Sigmoid colon (tissue), 7 donors: ENCODE measurements at regions of chr7 and their contacts with region 1.

Region 1: DNA sequence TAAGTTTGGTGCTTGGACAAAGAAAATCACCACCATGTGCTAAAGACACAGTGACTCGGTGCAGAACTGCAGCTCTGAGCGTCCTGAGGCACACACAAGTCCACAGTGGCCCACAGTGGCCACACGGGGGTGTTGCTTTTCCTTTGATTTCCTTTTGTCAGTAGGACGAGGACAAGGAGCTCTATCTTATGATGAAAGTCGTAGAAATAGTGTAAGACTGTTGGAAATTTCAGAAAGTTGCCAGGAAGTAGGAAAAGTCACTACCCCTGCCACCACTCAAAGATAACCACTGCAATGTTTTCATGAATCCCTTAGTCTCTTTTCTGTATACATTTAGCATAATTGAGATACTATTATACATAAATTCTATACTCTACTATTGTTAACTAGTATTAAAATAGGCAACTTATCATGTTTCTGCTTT is 146.0 kb downstream of the TNS3 start:
- DNase-seq: peak; percentile 87
- H3K4me3 ChIP-seq: no peak overlapping the region
- H3K27ac ChIP-seq: no peak overlapping the region
- H3K4me1 ChIP-seq: peaks cover 0 to 8% (median 5%) of the 10 kb centered on the region in 4 donors
- H3K27me3 ChIP-seq: no peaks in the 10 kb centered on the region
- CTCF ChIP-seq: peak; percentile 57 to 85 (median 80)
- EP300 ChIP-seq: no peak
- POLR2A ChIP-seq: no peak

Region 2: DNA sequence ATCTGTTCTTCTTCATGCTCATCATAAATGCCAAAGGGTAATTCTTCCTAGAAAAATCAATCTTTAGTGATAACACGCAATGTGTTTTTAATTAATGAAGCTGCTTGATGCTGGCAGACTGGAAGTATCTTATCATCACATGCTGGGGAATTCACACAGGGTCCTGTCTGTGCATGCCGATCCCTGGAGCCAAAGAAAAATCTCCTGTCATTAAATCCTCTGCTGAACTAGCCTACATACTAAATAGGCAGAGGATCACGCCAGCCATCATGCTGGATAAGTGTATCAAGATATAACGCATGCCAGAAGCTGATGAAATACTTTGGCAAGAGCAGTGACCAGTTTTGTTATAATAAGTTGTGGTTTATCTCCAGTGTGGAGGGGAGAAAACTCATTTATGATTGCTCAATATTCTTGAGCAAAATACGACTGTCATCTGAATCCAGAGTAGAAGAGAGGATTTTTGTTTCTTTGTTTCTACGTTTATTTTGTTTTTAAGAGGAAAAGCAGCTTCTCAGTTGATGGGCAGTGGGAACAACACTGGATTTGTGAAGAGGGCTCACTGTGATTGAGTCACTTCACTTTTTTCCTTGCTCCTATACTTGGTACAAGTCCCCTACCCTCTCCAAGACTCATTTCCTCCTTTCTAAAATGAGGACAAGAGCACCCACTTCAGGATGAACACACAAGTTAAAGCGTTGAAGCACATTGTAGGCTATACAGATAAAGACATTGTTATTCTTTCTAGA is 503.1 kb before region 1 on chr7:
- intact Hi-C with region 1: no loop called
- DNase-seq: peak; percentile 80
- H3K4me3 ChIP-seq: no peak overlapping the region
- H3K27ac ChIP-seq: peak overlapping the region in 3 of 4 donors; percentile 31 to 61 (median 38)
- H3K4me1 ChIP-seq: peaks cover 0 to 15% (median 12%) of the 10 kb centered on the region in 4 donors
- H3K27me3 ChIP-seq: no peaks in the 10 kb centered on the region
- CTCF ChIP-seq: no peak
- EP300 ChIP-seq: no peak
- POLR2A ChIP-seq: no peak

Region 3: DNA sequence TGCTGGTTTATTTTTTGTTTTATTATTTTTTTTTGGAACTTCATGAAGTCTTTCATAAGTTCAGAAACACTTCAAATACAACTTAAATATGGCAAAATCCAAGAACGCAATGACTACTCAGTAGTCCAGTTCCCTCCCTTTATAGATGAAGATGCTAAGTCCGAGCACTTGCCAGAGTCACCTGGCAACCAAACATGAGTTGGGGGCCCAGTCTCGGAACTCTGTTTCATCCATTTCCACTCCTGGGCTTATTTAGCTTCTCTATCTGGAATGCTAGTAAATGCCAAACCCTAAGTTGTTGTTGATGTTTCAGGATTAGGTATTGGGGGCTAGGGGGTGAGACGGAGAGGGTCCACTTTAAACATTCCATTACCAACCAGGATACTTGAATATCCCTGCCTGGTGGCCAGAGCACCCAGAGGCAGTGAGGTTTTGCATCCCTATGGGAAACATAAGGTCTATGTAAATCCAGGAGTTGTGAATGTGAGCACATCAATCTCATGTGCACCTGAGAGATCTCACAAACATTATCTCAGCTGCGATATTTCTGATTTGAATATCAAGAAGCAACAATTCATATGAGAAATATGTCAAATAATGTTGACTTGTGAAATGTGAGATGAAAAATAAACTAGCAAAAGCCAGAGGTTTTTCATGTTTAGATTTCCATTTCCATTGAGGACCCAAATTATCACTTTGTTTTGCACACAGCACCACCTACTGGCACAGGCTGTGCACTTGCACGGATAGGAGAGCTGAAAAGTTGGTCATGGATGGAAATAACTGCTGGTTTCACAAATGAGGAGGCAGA is 383.1 kb after region 1 on chr7:
- intact Hi-C with region 1: loop called (anchors 1 kb)
- DNase-seq: peak; percentile 82
- H3K4me3 ChIP-seq: no peak overlapping the region
- H3K27ac ChIP-seq: no peak overlapping the region
- H3K4me1 ChIP-seq: peaks cover 0 to 28% (median 14%) of the 10 kb centered on the region in 4 donors
- H3K27me3 ChIP-seq: no peaks in the 10 kb centered on the region
- CTCF ChIP-seq: peak; percentile 79 to 89 (median 88)
- EP300 ChIP-seq: no peak
- POLR2A ChIP-seq: no peak